ENCODE measurements at regions of chr6 and their contacts with region 1.

Region 1: GRCh38 chr6:77466055-77466450 is 2.8 kb upstream of the HTR1B start:
- DNase-seq: peak; percentile 13 to 48
- ATAC-seq: peak in 2 of 4 donors; percentile 59 to 70
- H3K4me3 ChIP-seq: peak overlapping the region; percentile 59
- H3K27ac ChIP-seq: no peak overlapping the region
- H3K4me1 ChIP-seq: no peaks in the 10 kb centered on the region
- H3K27me3 ChIP-seq: peaks cover 4 to 58% (median 23%) of the 10 kb centered on the region in 3 donors
- CTCF ChIP-seq: peak; percentile 20

Region 2: DNA sequence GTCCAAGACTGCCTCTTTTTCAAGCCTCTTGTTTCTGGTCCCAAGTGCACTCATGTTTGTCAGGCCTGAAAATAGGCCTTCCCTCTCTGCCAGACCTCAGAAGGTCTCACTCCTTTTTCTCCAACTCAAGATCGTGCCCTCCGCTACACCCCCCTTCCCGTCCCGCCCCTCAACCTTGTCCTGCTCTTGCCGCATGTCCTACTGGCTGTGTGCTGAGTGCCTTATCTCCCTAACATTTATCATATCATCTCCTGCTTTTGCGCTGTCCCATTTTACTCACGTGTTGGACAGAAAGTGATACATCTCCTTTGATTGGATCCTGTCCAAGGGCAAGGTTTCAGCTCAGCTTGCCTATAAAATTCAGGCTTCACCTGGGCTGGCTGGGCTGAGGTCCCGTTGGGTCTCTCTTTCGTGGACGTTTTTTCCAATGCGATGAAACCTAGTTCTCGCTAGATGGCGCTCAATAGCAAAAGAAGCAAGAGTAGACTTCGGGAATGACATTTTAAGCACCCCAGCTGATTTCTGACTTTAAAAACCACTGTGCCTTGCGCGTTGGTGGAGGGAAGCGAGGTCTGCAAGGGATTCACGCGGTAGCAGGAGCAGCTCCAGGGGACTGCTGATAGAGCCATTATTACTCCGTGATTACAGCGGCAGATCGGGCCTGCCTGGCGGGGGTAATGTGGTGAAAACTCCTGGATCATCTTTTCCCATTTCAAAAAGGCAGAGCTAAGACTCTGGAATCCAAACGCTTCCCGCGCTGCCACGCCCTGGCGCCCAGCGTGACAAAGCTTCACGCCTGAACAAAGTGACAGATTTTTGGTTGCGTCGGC is 1531.2 kb before region 1 on chr6:
- intact Hi-C with region 1: loop called in 1 of 2 experiments (anchors 10 kb)
- DNase-seq: no peak
- ATAC-seq: peak; percentile 34 to 82 (median 56)
- H3K4me3 ChIP-seq: peak overlapping the region; percentile 58
- H3K27ac ChIP-seq: no peak overlapping the region
- H3K4me1 ChIP-seq: no peaks in the 10 kb centered on the region
- H3K27me3 ChIP-seq: peaks cover 0 to 2% (median 0%) of the 10 kb centered on the region in 3 donors
- CTCF ChIP-seq: peak; percentile 65

Region 3: GRCh38 chr6:77511860-77512259 is 45.8 kb after region 1 on chr6:
- intact Hi-C with region 1: no loop called
- DNase-seq: no peak
- ATAC-seq: no peak
- H3K4me3 ChIP-seq: no peak overlapping the region
- H3K27ac ChIP-seq: no peak overlapping the region
- H3K4me1 ChIP-seq: no peaks in the 10 kb centered on the region
- H3K27me3 ChIP-seq: no peaks in the 10 kb centered on the region
- CTCF ChIP-seq: no peak